Motor neuron (in vitro differentiated cells): ENCODE measurements at regions of chr5 and their contacts with region 1.

Region 1: DNA sequence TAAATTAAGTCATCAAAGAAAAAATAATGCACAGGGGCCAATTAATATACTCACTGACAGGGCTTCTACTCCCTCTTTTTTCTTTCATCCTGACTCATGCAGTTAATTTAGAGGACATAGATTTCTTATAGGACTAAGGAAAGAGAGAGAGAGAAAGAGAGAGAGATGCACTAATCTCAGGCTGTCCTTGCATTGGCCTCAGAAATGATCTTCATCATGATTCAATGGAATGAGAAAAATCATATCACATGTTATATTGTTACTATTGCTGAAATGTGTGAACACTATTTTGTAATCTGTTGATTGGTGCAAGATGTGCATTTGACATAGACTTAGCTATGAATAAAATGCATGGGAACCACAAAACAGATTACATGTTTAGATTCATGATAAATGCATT is 608.3 kb upstream of the NUDT12 start:
- ATAC-seq: peak in 5 of 8 experiments; percentile 73 to 93 (median 88)
- H3K4me3 ChIP-seq: no peak overlapping the region
- H3K27ac ChIP-seq: no peak overlapping the region
- H3K4me1 ChIP-seq: peaks cover 0 to 16% of the 10 kb centered on the region in 2 donors

Region 2: GRCh38 chr5:103808464-103809106 is 362.3 kb before region 1 on chr5:
- in situ Hi-C with region 1: loop called in 1 of 9 experiments (anchors 25 kb)
- ATAC-seq: peak; percentile 70 to 91 (median 82)
- H3K4me3 ChIP-seq: no peak overlapping the region
- H3K27ac ChIP-seq: no peak overlapping the region
- H3K4me1 ChIP-seq: no peaks in the 10 kb centered on the region